A673 (cell line): ENCODE measurements at regions of chr3 and their contacts with region 1.

Region 1: DNA sequence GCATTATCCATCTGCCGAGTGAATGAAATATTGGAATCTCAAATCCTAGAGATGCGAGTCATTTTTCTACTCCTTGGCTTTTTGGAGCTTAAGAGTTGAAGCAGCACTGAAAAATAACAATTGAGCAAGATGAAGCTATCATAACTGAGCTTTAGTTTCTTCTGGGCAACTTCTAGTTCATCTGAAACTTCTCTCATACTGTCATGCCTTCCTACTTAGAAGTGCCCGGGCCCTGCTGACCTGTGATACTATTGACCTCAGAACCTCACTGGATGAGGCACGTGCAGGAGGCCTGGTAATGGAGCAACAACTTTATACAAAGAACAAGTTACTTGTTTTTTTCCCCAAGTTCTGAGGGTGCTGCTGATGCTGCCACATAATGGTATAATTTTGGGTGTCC is 48.5 kb upstream of the P3H2 start:
- DNase-seq: no peak
- H3K4me3 ChIP-seq: no peak overlapping the region
- H3K27ac ChIP-seq: no peak overlapping the region
- H3K4me1 ChIP-seq: no peaks in the 10 kb centered on the region
- H3K27me3 ChIP-seq: no peaks in the 10 kb centered on the region
- CTCF ChIP-seq: no peak

Region 2: DNA sequence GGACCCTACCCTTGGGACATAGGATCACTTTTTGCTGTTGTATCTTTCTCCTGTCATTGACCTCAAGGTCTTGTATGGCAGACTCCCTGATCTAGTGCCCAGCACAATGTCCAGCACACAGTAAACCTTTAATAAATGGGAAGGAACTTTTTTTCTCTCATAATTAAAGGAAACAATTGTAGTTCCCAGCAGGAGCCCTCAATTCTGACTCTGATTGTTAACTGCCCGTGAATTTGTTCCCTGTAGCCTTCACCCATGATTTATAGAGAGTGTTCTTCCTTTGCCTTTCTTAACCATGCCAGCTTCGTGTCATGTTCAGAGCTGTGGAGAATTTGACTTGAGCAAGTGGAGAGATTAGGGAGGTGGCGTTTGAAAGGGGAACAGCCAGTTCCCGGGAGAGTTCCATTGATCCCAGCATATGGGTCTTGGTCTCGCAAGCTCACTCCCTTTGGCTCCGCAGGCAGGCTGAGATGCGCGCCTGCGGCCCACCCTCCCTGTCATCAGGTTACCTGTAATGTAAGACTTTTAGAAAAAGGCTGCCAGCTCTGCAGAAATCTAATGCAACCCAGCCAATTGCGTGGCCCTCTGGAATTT is 355.5 kb before region 1 on chr3:
- CTCF ChIA-PET with region 1: no interaction called
- POLR2A ChIA-PET with region 1: no interaction called
- intact Hi-C with region 1: no loop called
- DNase-seq: no peak
- H3K4me3 ChIP-seq: no peak overlapping the region
- H3K27ac ChIP-seq: no peak overlapping the region
- H3K4me1 ChIP-seq: peaks cover 21% of the 10 kb centered on the region
- H3K27me3 ChIP-seq: no peaks in the 10 kb centered on the region
- CTCF ChIP-seq: no peak

Region 3: DNA sequence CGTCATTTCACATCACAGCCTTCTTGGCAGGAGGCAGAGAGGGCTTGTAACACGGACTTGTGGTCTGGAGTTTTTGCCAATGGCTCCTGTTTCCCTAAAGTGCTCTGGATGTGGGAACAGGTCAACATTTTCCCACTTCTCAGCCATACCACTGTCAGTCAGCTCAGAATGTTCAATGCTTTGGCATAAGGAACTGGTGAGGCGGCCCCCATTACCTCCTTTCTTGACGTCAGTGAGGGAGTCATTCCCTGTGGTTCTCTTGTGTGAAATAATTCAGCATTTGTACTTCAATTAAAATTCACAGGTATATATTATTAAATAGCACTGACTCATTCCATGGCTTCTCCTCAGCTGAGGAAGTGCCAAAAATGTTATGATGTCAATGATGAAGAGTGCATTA is 215.7 kb before region 1 on chr3:
- CTCF ChIA-PET with region 1: interaction called, 10 read pairs
- POLR2A ChIA-PET with region 1: no interaction called
- intact Hi-C with region 1: no loop called
- DNase-seq: no peak
- H3K4me3 ChIP-seq: no peak overlapping the region
- H3K27ac ChIP-seq: no peak overlapping the region
- H3K4me1 ChIP-seq: peaks cover 5% of the 10 kb centered on the region
- H3K27me3 ChIP-seq: no peaks in the 10 kb centered on the region
- CTCF ChIP-seq: no peak